ENCODE measurements at regions of chr13 and their contacts with region 1.

Region 1: GRCh38 chr13:48954081-48954480 is 21.6 kb upstream of the FNDC3A start:
- DNase-seq: no peak
- H3K4me3 ChIP-seq: no peak overlapping the region
- H3K27ac ChIP-seq: no peak overlapping the region
- H3K4me1 ChIP-seq: no peaks in the 10 kb centered on the region
- H3K27me3 ChIP-seq: no peaks in the 10 kb centered on the region
- CTCF ChIP-seq: no peak
- EP300 ChIP-seq: no peak
- POLR2A ChIP-seq: no peak

Region 2: GRCh38 chr13:48994706-48995105 is 40.6 kb after region 1 on chr13:
- intact Hi-C with region 1: loop called in 1 of 4 experiments (anchors 2 kb)
- DNase-seq: no peak
- H3K4me3 ChIP-seq: no peak overlapping the region
- H3K27ac ChIP-seq: no peak overlapping the region
- H3K4me1 ChIP-seq: peaks cover 1% of the 10 kb centered on the region
- H3K27me3 ChIP-seq: no peaks in the 10 kb centered on the region
- CTCF ChIP-seq: no peak
- EP300 ChIP-seq: no peak
- POLR2A ChIP-seq: no peak

Region 3: GRCh38 chr13:49256841-49257240 is 302.8 kb after region 1 on chr13:
- intact Hi-C with region 1: no loop called
- DNase-seq: no peak
- H3K4me3 ChIP-seq: no peak overlapping the region
- H3K27ac ChIP-seq: no peak overlapping the region
- H3K4me1 ChIP-seq: peaks cover 5% of the 10 kb centered on the region
- H3K27me3 ChIP-seq: no peaks in the 10 kb centered on the region
- CTCF ChIP-seq: no peak
- EP300 ChIP-seq: no peak
- POLR2A ChIP-seq: no peak